ENCODE measurements at regions of chr7 and their contacts with region 1.

Region 1: GRCh38 chr7:143287935-143288826 is at the start of gene CASP2:
- DNase-seq: peak; percentile 96 to 100 (median 99)
- ATAC-seq: peak; percentile 96
- H3K4me3 ChIP-seq: peak within 1 kb of the TSS; percentile 91 to 95
- H3K4me3 Mint-ChIP-seq: peak within 1 kb of the TSS; percentile 93
- H3K27ac ChIP-seq: peak within 1 kb of the TSS; percentile 64 to 72
- H3K27ac Mint-ChIP-seq: peak within 1 kb of the TSS; percentile 91
- H3K4me1 ChIP-seq: peaks cover 40% of the 10 kb centered on the region
- H3K4me1 Mint-ChIP-seq: peaks cover 53% of the 10 kb centered on the region
- H3K27me3 ChIP-seq: no peaks in the 10 kb centered on the region
- H3K27me3 Mint-ChIP-seq: no peaks in the 10 kb centered on the region
- CTCF ChIP-seq: peak; percentile 31
- total RNA-seq, gene CASP2: 16.0 to 19.1 TPM

Region 2: DNA sequence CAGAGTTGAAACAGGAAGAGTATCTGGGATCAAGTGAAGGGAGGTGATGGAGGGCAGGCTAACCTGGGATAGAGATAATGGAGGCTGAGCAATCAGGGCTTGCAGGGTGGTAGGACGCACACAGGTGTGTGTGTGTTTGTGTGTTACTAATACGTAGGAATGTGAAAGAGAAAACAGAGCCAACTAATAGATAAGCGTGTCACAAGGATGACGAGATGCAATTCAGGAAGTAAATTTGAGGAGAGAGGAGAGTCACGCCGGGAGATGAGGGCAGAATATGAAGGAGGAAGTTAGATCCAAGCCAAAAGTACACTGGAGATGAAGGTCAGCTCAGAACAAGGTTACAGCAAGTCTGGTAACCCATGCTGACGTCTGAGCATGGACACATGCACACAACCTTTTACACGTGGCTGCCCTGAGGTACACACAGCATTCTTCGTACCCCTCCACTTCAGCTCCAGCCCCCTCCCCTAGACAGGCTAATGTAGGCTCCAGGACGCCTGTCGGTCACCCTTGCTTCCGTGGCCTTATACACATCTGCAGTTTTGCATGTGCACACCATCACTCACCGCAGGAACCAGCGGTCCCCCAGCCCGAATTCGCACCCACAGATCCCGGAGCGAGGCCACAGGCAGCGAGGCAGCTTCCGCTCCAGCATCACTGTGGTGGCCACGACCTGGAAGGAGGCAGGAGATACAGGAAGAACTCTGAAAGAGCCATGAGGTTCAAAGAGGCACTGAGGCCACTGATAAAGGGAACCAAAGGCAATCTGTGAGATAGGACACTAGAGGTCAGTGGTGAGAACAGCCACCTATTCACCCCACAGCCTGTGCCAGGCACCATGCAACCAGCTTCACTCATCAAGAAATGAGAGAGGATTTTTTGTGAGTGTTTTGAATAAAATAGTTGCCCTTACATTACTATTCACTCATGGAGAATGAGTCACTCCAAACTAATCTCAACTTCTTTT is 379.0 kb before region 1 on chr7:
- CTCF ChIA-PET with region 1: no interaction called
- POLR2A ChIA-PET with region 1: no interaction called
- intact Hi-C with region 1: no loop called
- DNase-seq: peak in 1 of 9 experiments; percentile 14
- ATAC-seq: no peak
- H3K4me3 ChIP-seq: no peak overlapping the region
- H3K4me3 Mint-ChIP-seq: no peak overlapping the region
- H3K27ac ChIP-seq: no peak overlapping the region
- H3K27ac Mint-ChIP-seq: no peak overlapping the region
- H3K4me1 ChIP-seq: no peaks in the 10 kb centered on the region
- H3K4me1 Mint-ChIP-seq: no peaks in the 10 kb centered on the region
- H3K27me3 ChIP-seq: no peaks in the 10 kb centered on the region
- H3K27me3 Mint-ChIP-seq: peaks cover 28% of the 10 kb centered on the region
- CTCF ChIP-seq: no peak

Region 3: GRCh38 chr7:143269251-143269650 is 18.9 kb before region 1 on chr7:
- CTCF ChIA-PET with region 1: interaction called, 8 read pairs
- POLR2A ChIA-PET with region 1: interaction called, 3 read pairs
- intact Hi-C with region 1: loop called in 1 of 2 experiments (anchors 2 kb)
- DNase-seq: no peak
- ATAC-seq: no peak
- H3K4me3 ChIP-seq: no peak overlapping the region
- H3K4me3 Mint-ChIP-seq: no peak overlapping the region
- H3K27ac ChIP-seq: no peak overlapping the region
- H3K27ac Mint-ChIP-seq: peak overlapping the region; percentile 23
- H3K4me1 ChIP-seq: peaks cover 18% of the 10 kb centered on the region
- H3K4me1 Mint-ChIP-seq: peaks cover 32% of the 10 kb centered on the region
- H3K27me3 ChIP-seq: no peaks in the 10 kb centered on the region
- H3K27me3 Mint-ChIP-seq: no peaks in the 10 kb centered on the region
- CTCF ChIP-seq: no peak

Region 4: DNA sequence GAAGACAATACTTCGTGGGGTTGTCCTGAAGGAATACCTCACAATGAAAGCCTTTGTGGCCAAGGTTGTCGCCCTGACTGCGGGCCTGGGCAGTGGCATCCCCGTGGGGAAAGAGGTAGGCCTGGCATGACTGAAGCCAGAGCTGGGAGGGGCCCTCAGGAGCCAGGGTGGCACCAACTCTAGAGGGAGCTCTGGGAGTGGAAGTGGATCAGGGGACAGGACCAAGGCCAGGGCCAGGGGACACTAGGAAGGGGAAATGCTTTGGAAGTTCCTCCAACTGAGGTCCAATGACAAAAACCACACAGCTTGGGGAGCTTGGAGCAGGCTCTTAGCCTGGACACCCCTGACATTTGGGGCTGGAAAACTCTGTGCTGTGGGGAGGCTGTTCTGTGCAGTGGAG is 33.6 kb after region 1 on chr7:
- CTCF ChIA-PET with region 1: no interaction called
- POLR2A ChIA-PET with region 1: no interaction called
- intact Hi-C with region 1: no loop called
- DNase-seq: peak in 1 of 9 experiments; percentile 13
- ATAC-seq: no peak
- H3K4me3 ChIP-seq: no peak overlapping the region
- H3K4me3 Mint-ChIP-seq: no peak overlapping the region
- H3K27ac ChIP-seq: no peak overlapping the region
- H3K27ac Mint-ChIP-seq: no peak overlapping the region
- H3K4me1 ChIP-seq: no peaks in the 10 kb centered on the region
- H3K4me1 Mint-ChIP-seq: peaks cover 10% of the 10 kb centered on the region
- H3K27me3 ChIP-seq: no peaks in the 10 kb centered on the region
- H3K27me3 Mint-ChIP-seq: no peaks in the 10 kb centered on the region
- CTCF ChIP-seq: no peak

Region 5: GRCh38 chr7:143351060-143351459 is 62.9 kb after region 1 on chr7:
- CTCF ChIA-PET with region 1: no interaction called
- POLR2A ChIA-PET with region 1: no interaction called
- intact Hi-C with region 1: no loop called
- DNase-seq: no peak
- ATAC-seq: no peak
- H3K4me3 ChIP-seq: no peak overlapping the region
- H3K4me3 Mint-ChIP-seq: no peak overlapping the region
- H3K27ac ChIP-seq: no peak overlapping the region
- H3K27ac Mint-ChIP-seq: no peak overlapping the region
- H3K4me1 ChIP-seq: no peaks in the 10 kb centered on the region
- H3K4me1 Mint-ChIP-seq: no peaks in the 10 kb centered on the region
- H3K27me3 ChIP-seq: no peaks in the 10 kb centered on the region
- H3K27me3 Mint-ChIP-seq: no peaks in the 10 kb centered on the region
- CTCF ChIP-seq: no peak

Measured in CD8-positive, alpha-beta T cell (primary cell).